Psoas muscle (tissue), 8 donors: ENCODE measurements at regions of chr4 and their contacts with region 1.

Region 1: GRCh38 chr4:110211007-110211769 is 12.8 kb upstream of the ELOVL6 start:
- DNase-seq: no peak
- ATAC-seq: peak in 2 of 4 donors; percentile 50 to 62
- H3K4me3 ChIP-seq: no peak overlapping the region
- H3K27ac ChIP-seq: no peak overlapping the region
- H3K4me1 ChIP-seq: no peaks in the 10 kb centered on the region
- H3K27me3 ChIP-seq: no peaks in the 10 kb centered on the region
- CTCF ChIP-seq: peak; percentile 66

Region 2: GRCh38 chr4:110049951-110050925 is 160.9 kb before region 1 on chr4:
- intact Hi-C with region 1: loop called (anchors 2 to 5 kb)
- DNase-seq: no peak
- ATAC-seq: peak in 1 of 4 donors; percentile 65
- H3K4me3 ChIP-seq: no peak overlapping the region
- H3K27ac ChIP-seq: no peak overlapping the region
- H3K4me1 ChIP-seq: no peaks in the 10 kb centered on the region
- H3K27me3 ChIP-seq: no peaks in the 10 kb centered on the region
- CTCF ChIP-seq: peak; percentile 76

Region 3: DNA sequence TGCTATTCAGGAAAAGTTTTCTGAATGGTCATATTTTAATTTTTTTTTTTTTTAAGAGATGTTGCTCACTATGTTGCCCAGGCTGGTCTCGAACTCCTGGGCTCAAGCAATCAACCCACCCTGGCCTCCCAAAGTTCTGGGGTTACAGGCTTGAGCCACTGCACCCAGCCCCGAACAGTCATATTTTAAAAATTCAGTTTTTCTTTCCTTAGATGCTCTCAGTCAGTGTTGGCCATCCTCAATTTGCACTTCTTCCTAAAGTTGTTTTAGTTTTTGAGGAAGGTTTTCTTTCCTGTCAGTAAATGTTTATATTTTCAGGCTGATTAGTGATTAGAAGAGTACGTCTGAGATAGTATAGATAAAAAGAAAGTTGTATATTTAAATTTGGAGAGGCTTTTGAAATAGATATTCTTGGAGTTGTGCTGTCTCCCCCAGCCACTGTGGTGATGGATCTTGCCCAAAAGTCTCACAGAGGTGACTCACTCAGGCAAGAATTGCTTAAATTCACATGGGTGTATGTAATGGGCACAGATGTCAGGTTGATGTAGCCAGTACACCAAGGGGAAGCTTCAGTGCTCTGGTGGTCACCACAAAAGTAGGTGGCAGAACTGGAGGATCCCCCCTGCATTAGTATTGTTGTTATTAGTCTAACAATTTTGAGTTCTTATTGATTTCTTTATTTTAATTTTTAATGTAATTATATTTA is 59.5 kb after region 1 on chr4:
- intact Hi-C with region 1: no loop called
- DNase-seq: no peak
- ATAC-seq: peak in 2 of 4 donors; percentile 58 to 75
- H3K4me3 ChIP-seq: no peak overlapping the region
- H3K27ac ChIP-seq: no peak overlapping the region
- H3K4me1 ChIP-seq: no peaks in the 10 kb centered on the region
- H3K27me3 ChIP-seq: no peaks in the 10 kb centered on the region
- CTCF ChIP-seq: no peak